ENCODE measurements at regions of chr11 and their contacts with region 1.

Region 1: GRCh38 chr11:20127671-20128527 is 32.4 kb downstream of the DBX1 start:
- DNase-seq: peak; percentile 90
- ATAC-seq: peak; percentile 70
- H3K4me3 Mint-ChIP-seq: no peak overlapping the region
- H3K27ac Mint-ChIP-seq: no peak overlapping the region
- H3K4me1 Mint-ChIP-seq: peaks cover 10% of the 10 kb centered on the region
- H3K27me3 Mint-ChIP-seq: peaks cover 25% of the 10 kb centered on the region
- CTCF ChIP-seq: peak; percentile 86

Region 2: DNA sequence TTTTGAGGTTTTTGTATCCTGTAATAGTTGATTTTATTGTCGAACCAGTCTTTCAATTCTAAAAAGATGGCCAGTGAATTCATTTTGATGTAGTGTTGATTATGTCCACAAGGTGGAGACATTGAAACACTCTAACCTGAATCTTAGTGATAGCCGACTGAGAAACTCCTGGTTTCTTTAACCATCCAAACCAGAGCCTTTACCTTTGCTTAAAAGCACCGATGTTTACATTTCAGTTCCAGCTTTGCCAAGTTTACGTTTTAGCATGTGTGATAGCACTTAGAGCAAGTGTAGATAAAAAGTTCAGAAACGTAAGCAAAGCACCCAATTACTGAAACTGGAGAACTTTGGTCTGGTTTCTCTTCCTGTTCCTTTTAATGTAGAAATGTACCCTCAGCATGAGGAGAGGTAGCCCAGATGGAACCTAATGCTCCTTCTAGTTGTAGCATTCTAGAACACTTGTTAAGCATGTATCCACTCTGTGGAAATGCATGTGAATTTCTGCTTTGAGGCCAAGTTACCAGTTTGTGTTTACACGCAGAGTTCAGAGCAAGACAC is 176.3 kb before region 1 on chr11:
- CTCF ChIA-PET with region 1: interaction called, 20 read pairs
- POLR2A ChIA-PET with region 1: no interaction called
- DNase-seq: no peak
- ATAC-seq: peak; percentile 5; the same call in 1 of the 2 replicates
- H3K4me3 Mint-ChIP-seq: no peak overlapping the region
- H3K27ac Mint-ChIP-seq: no peak overlapping the region; the same call in 1 of the 2 replicates
- H3K4me1 Mint-ChIP-seq: peaks cover 46% of the 10 kb centered on the region
- H3K27me3 Mint-ChIP-seq: no peaks in the 10 kb centered on the region
- CTCF ChIP-seq: peak; percentile 36

Region 3: DNA sequence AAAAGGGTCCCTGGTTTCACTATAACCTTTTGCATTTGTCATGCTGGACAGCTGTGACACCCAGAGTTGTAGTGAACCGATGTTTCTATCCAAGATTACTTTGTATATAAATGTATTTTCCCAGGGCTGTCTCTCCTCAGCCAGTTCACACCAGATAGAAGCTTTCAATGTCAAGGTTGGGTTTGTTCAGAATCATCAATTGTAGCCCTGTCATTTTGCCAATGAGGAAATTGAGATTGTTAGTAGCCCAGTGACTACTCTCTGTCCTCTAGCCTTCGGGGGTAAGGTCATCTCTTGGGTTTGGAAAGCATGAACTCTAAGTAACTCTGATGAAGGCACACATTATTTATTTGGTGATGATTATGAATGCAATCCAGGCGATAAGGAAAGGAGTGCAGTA is 133.2 kb before region 1 on chr11:
- CTCF ChIA-PET with region 1: no interaction called
- POLR2A ChIA-PET with region 1: no interaction called
- DNase-seq: no peak
- ATAC-seq: no peak
- H3K4me3 Mint-ChIP-seq: no peak overlapping the region
- H3K27ac Mint-ChIP-seq: no peak overlapping the region
- H3K4me1 Mint-ChIP-seq: peaks cover 20% of the 10 kb centered on the region
- H3K27me3 Mint-ChIP-seq: peaks cover 37% of the 10 kb centered on the region
- CTCF ChIP-seq: no peak

Region 4: GRCh38 chr11:20156280-20156875 is 28.5 kb after region 1 on chr11:
- CTCF ChIA-PET with region 1: interaction called, 48 read pairs
- POLR2A ChIA-PET with region 1: no interaction called
- DNase-seq: peak; percentile 81
- ATAC-seq: peak; percentile 59
- H3K4me3 Mint-ChIP-seq: peak overlapping the region; percentile 89
- H3K27ac Mint-ChIP-seq: no peak overlapping the region
- H3K4me1 Mint-ChIP-seq: peaks cover 58% of the 10 kb centered on the region
- H3K27me3 Mint-ChIP-seq: peaks cover 82% of the 10 kb centered on the region
- CTCF ChIP-seq: no peak

Region 5: GRCh38 chr11:20249378-20249777 is 121.5 kb after region 1 on chr11:
- CTCF ChIA-PET with region 1: interaction called, 13 read pairs
- POLR2A ChIA-PET with region 1: interaction called, 3 read pairs
- DNase-seq: no peak
- ATAC-seq: no peak
- H3K4me3 Mint-ChIP-seq: no peak overlapping the region
- H3K27ac Mint-ChIP-seq: no peak overlapping the region
- H3K4me1 Mint-ChIP-seq: peaks cover 40% of the 10 kb centered on the region
- H3K27me3 Mint-ChIP-seq: peaks cover 63% of the 10 kb centered on the region
- CTCF ChIP-seq: no peak

Region 6: GRCh38 chr11:20337526-20338154 is 209.7 kb after region 1 on chr11:
- CTCF ChIA-PET with region 1: interaction called, 21 read pairs
- POLR2A ChIA-PET with region 1: no interaction called
- DNase-seq: peak; percentile 36
- ATAC-seq: peak; percentile 85
- H3K4me3 Mint-ChIP-seq: no peak overlapping the region
- H3K27ac Mint-ChIP-seq: no peak overlapping the region
- H3K4me1 Mint-ChIP-seq: peaks cover 20% of the 10 kb centered on the region
- H3K27me3 Mint-ChIP-seq: peaks cover 7% of the 10 kb centered on the region
- CTCF ChIP-seq: no peak

Region 7: DNA sequence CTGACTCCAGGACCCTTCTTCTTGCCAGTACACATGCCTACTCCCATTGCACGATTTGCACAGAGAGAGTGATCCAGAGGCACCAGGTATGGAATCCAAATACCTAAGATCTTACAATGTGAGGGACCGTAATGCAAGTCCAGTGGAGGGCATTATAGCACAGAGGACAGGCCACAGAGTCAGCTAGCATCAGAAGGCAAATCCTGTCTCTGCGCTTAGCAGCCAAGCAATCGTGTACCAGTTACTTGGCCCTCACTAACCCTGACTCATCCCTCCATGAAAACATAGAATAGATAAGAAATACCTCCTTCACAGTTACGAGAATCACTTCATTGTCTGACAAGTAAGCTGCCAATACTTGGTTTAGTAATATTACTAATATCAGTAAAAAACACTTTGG is 401.9 kb after region 1 on chr11:
- CTCF ChIA-PET with region 1: no interaction called
- POLR2A ChIA-PET with region 1: no interaction called
- DNase-seq: no peak
- ATAC-seq: no peak
- H3K4me3 Mint-ChIP-seq: no peak overlapping the region
- H3K27ac Mint-ChIP-seq: no peak overlapping the region
- H3K4me1 Mint-ChIP-seq: peaks cover 8% of the 10 kb centered on the region; the same call in 1 of the 2 replicates
- H3K27me3 Mint-ChIP-seq: no peaks in the 10 kb centered on the region; the same call in 1 of the 2 replicates
- CTCF ChIP-seq: no peak

Region 8: DNA sequence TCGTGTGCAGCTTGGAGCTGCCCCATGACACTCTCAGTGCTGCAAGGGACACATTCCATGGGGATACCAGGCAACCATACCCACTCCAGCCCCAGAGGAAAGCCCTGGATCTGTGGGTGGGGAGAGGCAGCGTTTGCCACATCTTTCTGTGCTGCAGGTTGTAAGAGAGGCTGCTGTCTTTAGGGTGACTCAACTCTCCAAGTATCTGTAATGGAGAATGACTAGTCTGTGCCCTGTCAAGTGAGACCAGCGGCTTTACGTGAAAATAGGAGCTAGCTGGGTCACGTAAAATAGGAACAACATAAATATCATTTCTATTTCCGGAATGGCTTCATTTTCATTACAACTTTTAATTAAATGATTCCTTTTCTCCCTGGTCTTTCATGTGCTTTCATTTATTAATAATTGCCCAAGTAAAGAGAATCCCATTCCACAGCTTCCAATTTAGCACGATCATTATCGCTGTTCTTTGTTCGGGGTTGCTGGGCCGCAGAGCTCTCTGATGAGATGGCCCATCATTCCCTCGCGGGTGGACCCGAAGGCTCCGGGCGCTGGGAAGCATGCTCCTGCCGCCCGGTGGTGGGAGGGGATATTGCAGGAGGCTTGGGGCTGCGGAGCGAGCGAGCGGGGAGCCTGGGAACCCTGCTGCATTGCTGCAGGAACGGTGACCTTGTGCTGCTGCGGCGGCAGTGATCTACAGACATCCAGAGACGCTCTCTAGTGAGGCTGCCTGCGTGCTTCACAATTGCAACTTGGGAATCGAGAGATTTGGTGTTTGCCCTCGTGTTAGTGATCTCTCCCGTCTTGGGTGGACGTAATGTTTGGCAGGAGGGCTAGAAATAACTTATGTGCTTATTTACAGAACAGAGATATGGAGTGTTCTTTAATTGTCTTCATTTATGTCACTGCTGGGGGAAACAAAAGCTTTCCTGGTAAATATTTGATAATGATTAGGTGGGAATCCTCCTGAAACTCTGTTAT is 482.1 kb after region 1 on chr11:
- CTCF ChIA-PET with region 1: interaction called, 11 read pairs
- POLR2A ChIA-PET with region 1: no interaction called
- DNase-seq: peak; percentile 94
- ATAC-seq: peak; percentile 95
- H3K4me3 Mint-ChIP-seq: peak overlapping the region; percentile 20
- H3K27ac Mint-ChIP-seq: no peak overlapping the region
- H3K4me1 Mint-ChIP-seq: peaks cover 31% of the 10 kb centered on the region
- H3K27me3 Mint-ChIP-seq: peaks cover 68% of the 10 kb centered on the region
- CTCF ChIP-seq: peak; percentile 95

Measured in WTC11 (cell line).